GM12878 (cell line): ENCODE measurements at regions of chr6 and their contacts with region 1.

Region 1: GRCh38 chr6:142692942-142693341 is 252.0 kb downstream of the HIVEP2 start:
- DNase-seq: no peak
- ATAC-seq: peak; percentile 91
- H3K4me3 ChIP-seq: no peak overlapping the region
- H3K27ac ChIP-seq: no peak overlapping the region
- H3K4me1 ChIP-seq: peaks cover 3% of the 10 kb centered on the region; the same call in 1 of the 2 replicates
- H3K27me3 ChIP-seq: no peaks in the 10 kb centered on the region
- CTCF ChIP-seq: peak; percentile 87 to 93 (median 89)
- EP300 ChIP-seq: no peak
- POLR2A ChIP-seq: no peak
- RAD21 ChIP-seq: peak; percentile 98

Region 2: DNA sequence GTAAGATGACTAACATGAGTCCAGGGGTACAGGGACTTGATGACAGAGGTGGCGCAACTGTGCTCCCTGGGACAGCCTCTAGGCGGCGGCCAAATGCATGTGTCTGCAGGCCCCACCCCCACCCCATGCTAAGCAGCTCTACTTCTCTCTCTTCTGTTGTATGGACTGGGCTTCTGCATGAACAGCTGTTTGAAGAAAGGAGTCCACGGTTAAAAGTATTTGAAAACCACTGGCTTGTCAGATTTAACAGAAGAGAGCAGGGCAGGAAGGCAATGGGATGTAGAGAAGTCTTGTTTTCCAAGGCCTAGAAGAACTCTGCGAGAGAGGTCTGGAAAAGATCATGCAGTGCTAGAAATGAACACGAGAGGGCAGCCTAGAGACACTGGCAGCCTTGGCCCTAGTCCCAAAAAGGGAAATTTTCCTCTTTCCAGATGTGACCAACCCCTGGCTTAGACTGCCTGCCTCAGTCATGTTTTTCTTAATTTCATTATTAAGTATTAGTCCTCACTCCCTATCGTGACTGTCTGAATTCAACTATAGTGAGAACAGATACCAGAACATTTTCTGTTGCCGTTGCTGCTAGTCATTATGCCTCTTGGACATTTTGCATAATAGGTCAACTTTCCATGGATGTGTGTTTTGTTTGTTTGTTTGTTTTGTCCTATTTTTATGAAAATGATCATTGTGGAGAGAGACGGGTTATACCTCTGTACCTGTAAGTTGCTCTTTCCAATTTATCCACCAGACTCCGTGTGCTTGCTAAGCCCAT is 126.1 kb before region 1 on chr6:
- CTCF ChIA-PET with region 1: interaction called, 11 read pairs
- POLR2A ChIA-PET with region 1: no interaction called
- RAD21 ChIA-PET with region 1: no interaction called
- SMC1A ChIA-PET with region 1: interaction called, 4 read pairs
- in situ Hi-C with region 1: no loop called
- intact Hi-C with region 1: loop called (anchors 2 kb)
- DNase-seq: peak; percentile 11
- ATAC-seq: peak; percentile 81
- H3K4me3 ChIP-seq: no peak overlapping the region
- H3K27ac ChIP-seq: no peak overlapping the region
- H3K4me1 ChIP-seq: no peaks in the 10 kb centered on the region
- H3K27me3 ChIP-seq: no peaks in the 10 kb centered on the region
- CTCF ChIP-seq: peak; percentile 85 to 92 (median 91)
- EP300 ChIP-seq: no peak
- POLR2A ChIP-seq: no peak
- RAD21 ChIP-seq: peak; percentile 83

Region 3: DNA sequence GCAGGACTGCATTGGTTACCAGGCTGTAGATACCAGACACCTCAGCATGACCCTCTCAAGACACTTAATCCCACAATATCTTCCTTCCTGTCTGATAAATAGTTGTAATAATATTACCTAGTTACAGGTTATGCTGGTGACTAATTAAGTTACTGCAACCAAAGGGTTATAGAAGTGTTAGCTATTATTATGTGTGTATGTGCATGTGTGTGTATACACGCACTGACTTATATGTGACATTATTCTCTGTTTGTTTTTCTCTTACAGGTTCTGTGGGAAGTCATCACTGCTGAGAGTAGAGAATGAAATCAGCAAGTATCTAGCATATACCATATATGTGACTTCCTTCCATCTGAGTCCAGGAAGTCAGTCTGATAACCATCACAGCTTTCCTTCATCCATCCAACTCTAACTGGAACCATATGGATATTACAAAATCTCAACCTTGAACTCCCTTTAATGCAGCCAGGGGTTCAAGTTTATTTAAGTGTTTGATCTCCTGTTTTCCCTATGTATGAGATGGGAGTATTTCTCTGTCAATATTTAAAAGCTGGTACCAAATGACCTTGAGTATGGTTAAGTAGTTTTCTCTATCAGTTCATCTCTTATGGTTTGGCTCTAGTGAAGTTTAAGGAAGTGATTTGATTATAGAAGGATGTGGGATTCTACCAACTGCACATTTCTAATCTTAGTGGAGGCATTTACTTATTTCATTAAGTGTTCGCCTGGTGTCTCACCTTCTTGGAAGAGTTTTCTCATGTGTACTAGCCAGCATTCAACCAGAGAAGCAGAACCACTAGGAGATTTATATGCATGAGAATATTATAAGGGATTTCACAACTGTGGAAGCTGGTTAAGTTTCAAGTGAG is 61.2 kb before region 1 on chr6:
- CTCF ChIA-PET with region 1: no interaction called
- POLR2A ChIA-PET with region 1: no interaction called
- RAD21 ChIA-PET with region 1: no interaction called
- SMC1A ChIA-PET with region 1: no interaction called
- in situ Hi-C with region 1: no loop called
- intact Hi-C with region 1: no loop called
- DNase-seq: no peak
- ATAC-seq: no peak
- H3K4me3 ChIP-seq: no peak overlapping the region
- H3K27ac ChIP-seq: no peak overlapping the region
- H3K4me1 ChIP-seq: no peaks in the 10 kb centered on the region
- H3K27me3 ChIP-seq: peaks cover 0 to 2% of the 10 kb centered on the region in 2 experiments; a peak in 1 of 4 replicates
- CTCF ChIP-seq: no peak
- EP300 ChIP-seq: no peak
- POLR2A ChIP-seq: no peak
- RAD21 ChIP-seq: no peak

Region 4: GRCh38 chr6:142833054-142833453 is 140.1 kb after region 1 on chr6:
- CTCF ChIA-PET with region 1: interaction called, 3 read pairs
- POLR2A ChIA-PET with region 1: no interaction called
- RAD21 ChIA-PET with region 1: interaction called, 10 read pairs
- SMC1A ChIA-PET with region 1: interaction called, 5 read pairs
- in situ Hi-C with region 1: no loop called
- intact Hi-C with region 1: no loop called
- DNase-seq: no peak
- ATAC-seq: peak; percentile 50
- H3K4me3 ChIP-seq: no peak overlapping the region
- H3K27ac ChIP-seq: no peak overlapping the region
- H3K4me1 ChIP-seq: 0 out of 2 replicates have a peak, but pooled peaks cover 2% of the 10 kb centered on the region
- H3K27me3 ChIP-seq: no peaks in the 10 kb centered on the region
- CTCF ChIP-seq: no peak
- EP300 ChIP-seq: no peak
- POLR2A ChIP-seq: no peak
- RAD21 ChIP-seq: no peak

Region 5: DNA sequence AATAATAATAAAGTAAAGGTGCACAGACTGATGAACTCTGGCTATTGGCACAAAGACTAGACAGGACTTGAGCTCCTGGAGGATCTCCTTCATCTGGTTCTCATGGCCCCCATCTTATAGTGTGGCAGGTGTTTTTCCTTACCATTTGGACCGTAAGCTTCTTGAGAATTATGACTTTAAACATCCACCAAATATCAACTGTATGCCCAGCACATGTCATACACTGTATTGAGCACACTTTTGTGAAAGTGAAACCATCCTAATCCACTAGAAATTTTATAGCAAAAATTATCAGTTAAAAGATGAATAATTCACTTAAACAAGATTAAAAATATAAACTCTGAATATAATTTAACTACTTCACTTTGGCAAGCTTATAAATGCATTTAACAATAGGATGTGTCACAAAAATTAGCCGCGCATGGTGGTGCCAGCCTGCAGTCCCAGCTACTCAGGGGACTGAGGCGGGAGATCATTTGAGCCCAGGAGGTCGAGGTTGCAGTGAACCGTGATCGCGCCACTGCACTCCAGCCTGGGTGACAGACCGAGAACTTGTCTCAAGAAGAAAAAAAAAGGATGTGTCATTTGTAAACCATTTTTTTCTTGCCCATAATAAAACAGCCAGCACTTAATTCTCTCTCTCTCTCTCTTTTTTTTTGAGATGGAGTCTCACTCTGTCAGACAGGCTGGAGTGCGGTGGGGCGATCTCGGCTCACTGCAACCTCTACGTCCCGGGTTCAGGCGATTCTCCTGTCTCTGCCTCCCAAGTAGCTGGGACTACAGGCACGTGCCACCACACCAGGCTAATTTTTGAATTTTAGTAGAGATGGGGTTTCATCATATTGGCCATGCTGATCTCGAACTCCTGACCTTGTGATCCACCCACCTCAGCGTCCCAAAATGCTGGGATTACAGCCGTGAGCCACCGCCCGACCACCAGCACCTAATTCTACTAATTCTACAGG is 242.9 kb after region 1 on chr6:
- CTCF ChIA-PET with region 1: interaction called, 3 read pairs
- POLR2A ChIA-PET with region 1: no interaction called
- RAD21 ChIA-PET with region 1: interaction called, 6 read pairs
- SMC1A ChIA-PET with region 1: no interaction called
- in situ Hi-C with region 1: loop called (anchors 5 kb)
- intact Hi-C with region 1: loop called (anchors 5 kb)
- DNase-seq: no peak
- ATAC-seq: peak; percentile 67
- H3K4me3 ChIP-seq: peak overlapping the region; percentile 34; the same call in 1 of the 2 replicates
- H3K27ac ChIP-seq: peak overlapping the region; percentile 66
- H3K4me1 ChIP-seq: peaks cover 31% of the 10 kb centered on the region
- H3K27me3 ChIP-seq: no peaks in the 10 kb centered on the region
- CTCF ChIP-seq: no peak
- EP300 ChIP-seq: no peak
- POLR2A ChIP-seq: no peak
- RAD21 ChIP-seq: no peak

Region 6: DNA sequence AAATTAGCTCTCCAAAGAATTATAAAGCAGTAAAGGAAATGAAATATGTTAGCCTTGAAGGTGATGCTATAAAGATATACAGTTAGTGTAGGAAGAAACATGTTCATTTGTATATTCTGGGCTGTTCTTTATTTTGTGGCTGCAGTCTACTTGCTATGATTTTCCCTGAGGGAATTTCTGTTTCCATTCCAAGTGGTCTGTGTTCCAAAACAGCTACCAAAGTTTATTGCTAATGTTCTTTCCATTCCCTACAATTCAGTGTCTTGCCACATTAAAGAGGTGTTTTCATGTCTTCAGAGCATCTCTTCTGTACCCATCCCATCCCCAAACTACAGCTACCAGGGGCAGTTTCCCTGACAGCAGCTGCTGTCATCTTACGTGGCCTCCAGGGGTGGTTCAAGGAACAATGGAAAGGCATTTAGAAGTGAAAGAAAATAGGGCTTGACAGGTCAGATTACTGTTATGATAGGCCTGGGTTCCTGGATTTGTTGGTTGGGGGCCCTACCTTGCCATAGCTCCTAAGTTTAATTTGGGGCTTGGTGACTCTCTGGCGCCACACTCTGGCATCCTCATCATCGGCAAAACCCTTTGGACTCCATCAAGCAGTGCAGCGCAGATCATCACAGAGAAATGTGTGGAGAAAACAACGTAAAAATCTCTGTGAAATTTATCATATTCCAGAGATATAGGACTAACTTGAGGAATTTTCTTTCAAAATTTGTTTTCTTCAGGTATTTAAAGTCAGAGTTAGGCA is 333.9 kb after region 1 on chr6:
- CTCF ChIA-PET with region 1: interaction called, 61 read pairs
- POLR2A ChIA-PET with region 1: no interaction called
- RAD21 ChIA-PET with region 1: interaction called, 54 read pairs
- SMC1A ChIA-PET with region 1: interaction called, 123 read pairs
- in situ Hi-C with region 1: no loop called
- intact Hi-C with region 1: loop called (anchors 1 kb)
- DNase-seq: no peak
- ATAC-seq: peak; percentile 76
- H3K4me3 ChIP-seq: no peak overlapping the region
- H3K27ac ChIP-seq: no peak overlapping the region
- H3K4me1 ChIP-seq: no peaks in the 10 kb centered on the region
- H3K27me3 ChIP-seq: no peaks in the 10 kb centered on the region
- CTCF ChIP-seq: peak; percentile 50 to 54 (median 50); a peak in 5 of 6 replicates
- EP300 ChIP-seq: no peak
- POLR2A ChIP-seq: no peak
- RAD21 ChIP-seq: peak; percentile 60

Region 7: GRCh38 chr6:143279385-143279784 is 586.4 kb after region 1 on chr6:
- CTCF ChIA-PET with region 1: interaction called, 29 read pairs
- POLR2A ChIA-PET with region 1: no interaction called
- RAD21 ChIA-PET with region 1: interaction called, 25 read pairs
- SMC1A ChIA-PET with region 1: interaction called, 30 read pairs
- in situ Hi-C with region 1: no loop called
- intact Hi-C with region 1: loop called (anchors 1 kb)
- DNase-seq: no peak
- ATAC-seq: peak; percentile 83
- H3K4me3 ChIP-seq: no peak overlapping the region
- H3K27ac ChIP-seq: no peak overlapping the region
- H3K4me1 ChIP-seq: peaks cover 7% of the 10 kb centered on the region; the same call in 1 of the 2 replicates
- H3K27me3 ChIP-seq: no peaks in the 10 kb centered on the region
- CTCF ChIP-seq: peak; percentile 37 to 58 (median 52); a peak in 4 of 6 replicates
- EP300 ChIP-seq: no peak
- POLR2A ChIP-seq: no peak
- RAD21 ChIP-seq: peak; percentile 69

Region 8: GRCh38 chr6:143427109-143427817 is 734.3 kb after region 1 on chr6:
- CTCF ChIA-PET with region 1: interaction called, 56 read pairs
- POLR2A ChIA-PET with region 1: no interaction called
- RAD21 ChIA-PET with region 1: interaction called, 20 read pairs
- SMC1A ChIA-PET with region 1: interaction called, 41 read pairs
- in situ Hi-C with region 1: loop called (anchors 25 kb)
- intact Hi-C with region 1: loop called (anchors 1 kb)
- DNase-seq: no peak
- ATAC-seq: peak; percentile 100
- H3K4me3 ChIP-seq: no peak overlapping the region
- H3K27ac ChIP-seq: no peak overlapping the region
- H3K4me1 ChIP-seq: no peaks in the 10 kb centered on the region
- H3K27me3 ChIP-seq: no peaks in the 10 kb centered on the region
- CTCF ChIP-seq: peak; percentile 94 to 98 (median 96); a peak in 5 of 6 replicates
- EP300 ChIP-seq: no peak
- POLR2A ChIP-seq: no peak
- RAD21 ChIP-seq: peak; percentile 100